Left colon (tissue), 2 donors: ENCODE measurements at regions of chr20 and their contacts with region 1.

Region 1: GRCh38 chr20:57061058-57061900 is 205.2 kb downstream of the BMP7 start:
- DNase-seq: no peak
- ATAC-seq: no peak

Region 2: DNA sequence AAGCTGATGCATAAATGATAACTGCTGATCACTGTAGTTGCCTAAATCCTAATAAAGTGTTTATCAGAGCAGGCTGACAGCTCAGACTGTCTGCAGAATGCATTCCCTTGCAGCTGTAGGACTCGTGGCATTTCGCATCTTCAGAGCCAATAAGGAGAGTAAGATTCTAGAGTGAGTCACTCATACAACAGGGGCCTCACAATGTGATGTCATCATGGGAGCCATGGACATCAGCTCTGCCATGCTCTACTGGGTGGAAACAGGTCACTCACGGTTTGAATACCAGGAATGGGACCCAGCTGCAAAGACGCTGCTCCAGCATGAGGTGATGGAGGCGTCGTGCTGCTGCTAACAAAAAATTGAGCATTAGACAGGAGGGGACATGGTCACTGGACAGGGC is 520.9 kb before region 1 on chr20:
- intact Hi-C with region 1: loop called in 1 of 2 experiments (anchors 10 kb)
- DNase-seq: no peak
- ATAC-seq: no peak